Activated naive CD4-positive, alpha-beta T cell treated with anti-CD3 and anti-CD28 coated beads, Interleukin-2, amount 10 ng/mL, durations not matched to agents 7 days and 5 days (primary cell): ENCODE measurements at regions of chr11 and their contacts with region 1.

Region 1: GRCh38 chr11:8099291-8099899 is 18.4 kb downstream of the TUB start:
- DNase-seq: peak; percentile 83
- H3K4me3 Mint-ChIP-seq: no peak overlapping the region
- H3K27ac Mint-ChIP-seq: no peak overlapping the region
- H3K4me1 Mint-ChIP-seq: no peaks in the 10 kb centered on the region
- H3K27me3 Mint-ChIP-seq: no peaks in the 10 kb centered on the region

Region 2: DNA sequence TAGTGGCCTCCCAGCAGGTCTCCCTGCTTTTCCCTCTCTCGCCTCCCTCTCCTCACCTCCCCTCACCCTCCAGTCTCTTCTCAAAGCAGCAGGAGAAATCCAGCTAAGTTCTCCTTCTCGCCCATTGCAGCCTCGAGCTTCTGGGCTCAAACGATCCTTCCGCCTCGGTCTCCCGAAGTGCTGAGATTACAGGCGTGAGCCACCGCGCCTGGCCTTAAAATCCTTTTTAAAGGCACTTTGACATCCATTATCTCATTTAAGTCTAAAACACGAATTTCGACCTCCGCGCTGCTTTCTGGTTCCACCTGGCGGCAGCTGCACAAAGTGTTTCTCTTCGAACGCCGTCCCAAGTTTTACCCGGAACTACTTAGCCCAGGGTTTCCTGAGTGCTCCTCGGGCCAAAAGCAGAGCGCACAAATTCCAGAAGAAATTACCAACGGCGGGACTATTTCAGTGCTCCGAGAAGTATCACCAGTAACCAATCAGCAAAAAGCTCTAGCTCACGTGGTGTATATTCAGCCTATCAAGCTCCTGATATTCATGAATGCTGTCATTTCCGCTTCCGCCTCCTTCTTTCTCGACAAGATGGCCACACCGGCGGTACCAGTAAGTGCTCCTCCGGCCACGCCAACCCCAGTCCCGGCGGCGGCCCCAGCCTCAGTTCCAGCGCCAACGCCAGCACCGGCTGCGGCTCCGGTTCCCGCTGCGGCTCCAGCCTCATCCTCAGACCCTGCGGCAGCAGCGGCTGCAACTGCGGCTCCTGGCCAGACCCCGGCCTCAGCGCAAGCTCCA is 112.4 kb before region 1 on chr11 and contains the start of gene EIF3F:
- CTCF ChIA-PET with region 1: interaction called, 11 read pairs
- DNase-seq: peak; percentile 93
- H3K4me3 Mint-ChIP-seq: peak within 1 kb of the TSS; percentile 83
- H3K27ac Mint-ChIP-seq: peak within 1 kb of the TSS; percentile 89
- H3K4me1 Mint-ChIP-seq: peaks cover 38% of the 10 kb centered on the region
- H3K27me3 Mint-ChIP-seq: no peaks in the 10 kb centered on the region

Region 3: GRCh38 chr11:8023831-8024555 is 75.4 kb before region 1 on chr11:
- CTCF ChIA-PET with region 1: interaction called, 16 read pairs
- DNase-seq: no peak
- H3K4me3 Mint-ChIP-seq: no peak overlapping the region
- H3K27ac Mint-ChIP-seq: no peak overlapping the region
- H3K4me1 Mint-ChIP-seq: peaks cover 8% of the 10 kb centered on the region
- H3K27me3 Mint-ChIP-seq: peaks cover 19% of the 10 kb centered on the region

Region 4: GRCh38 chr11:8055091-8055835 is 44.1 kb before region 1 on chr11:
- CTCF ChIA-PET with region 1: interaction called, 11 read pairs
- DNase-seq: no peak
- H3K4me3 Mint-ChIP-seq: no peak overlapping the region
- H3K27ac Mint-ChIP-seq: no peak overlapping the region
- H3K4me1 Mint-ChIP-seq: peaks cover 4% of the 10 kb centered on the region
- H3K27me3 Mint-ChIP-seq: peaks cover 4% of the 10 kb centered on the region